Panc1 (cell line): ENCODE measurements at regions of chr2 and their contacts with region 1.

Region 1: DNA sequence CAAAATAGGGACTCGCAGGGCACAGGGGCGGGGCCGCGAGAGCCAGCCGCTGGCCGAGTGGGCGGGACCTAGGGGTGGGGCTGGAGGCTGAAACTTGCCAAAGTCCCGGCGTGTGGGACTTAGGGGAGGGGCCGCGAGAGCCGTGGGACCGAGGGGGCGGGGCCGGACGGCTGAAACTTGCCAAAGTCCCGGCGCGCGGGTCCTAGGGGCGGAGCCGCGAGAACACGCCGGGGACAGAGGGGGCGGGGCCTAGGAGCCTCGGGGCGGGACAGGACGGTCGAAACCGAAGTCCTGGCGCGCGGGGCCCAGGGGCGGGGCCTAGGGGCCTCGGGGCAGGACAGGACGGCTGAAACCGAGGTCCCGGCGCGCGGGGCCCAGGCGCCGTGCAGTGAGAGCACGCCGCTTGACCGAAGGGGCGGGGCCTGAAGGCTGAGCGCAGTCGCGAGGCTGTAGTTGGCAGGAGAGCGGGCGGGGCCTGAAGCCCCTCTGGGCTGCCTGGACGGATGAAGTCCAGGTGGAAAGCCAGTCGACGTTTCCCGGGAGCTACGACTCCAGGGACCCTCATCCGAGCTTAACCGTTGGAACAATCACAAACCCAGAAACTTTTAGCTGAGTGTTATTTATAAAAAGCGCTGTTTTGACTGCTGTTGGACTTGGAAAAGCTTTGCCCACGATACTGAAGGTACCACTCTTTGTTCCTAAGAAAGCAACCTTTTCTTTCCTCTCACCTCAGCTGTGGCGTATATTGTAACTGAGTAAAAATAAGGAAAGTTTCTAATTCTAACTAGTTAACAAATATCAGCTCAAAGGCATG is 475 bp upstream of the BARD1 start:
- DNase-seq: peak; percentile 88
- ATAC-seq: peak; percentile 96
- H3K4me3 ChIP-seq: peak overlapping the region; percentile 91 to 95
- H3K27ac ChIP-seq: peak overlapping the region; percentile 93
- H3K4me1 ChIP-seq: peaks cover 16% of the 10 kb centered on the region
- H3K27me3 ChIP-seq: no peaks in the 10 kb centered on the region
- CTCF ChIP-seq: no peak

Region 2: GRCh38 chr2:214648520-214648919 is 161.4 kb before region 1 on chr2:
- CTCF ChIA-PET with region 1: no interaction called
- POLR2A ChIA-PET with region 1: no interaction called
- in situ Hi-C with region 1: no loop called
- intact Hi-C with region 1: no loop called
- DNase-seq: no peak
- ATAC-seq: no peak
- H3K4me3 ChIP-seq: no peak overlapping the region
- H3K27ac ChIP-seq: no peak overlapping the region
- H3K4me1 ChIP-seq: no peaks in the 10 kb centered on the region
- H3K27me3 ChIP-seq: no peaks in the 10 kb centered on the region
- CTCF ChIP-seq: no peak

Region 3: DNA sequence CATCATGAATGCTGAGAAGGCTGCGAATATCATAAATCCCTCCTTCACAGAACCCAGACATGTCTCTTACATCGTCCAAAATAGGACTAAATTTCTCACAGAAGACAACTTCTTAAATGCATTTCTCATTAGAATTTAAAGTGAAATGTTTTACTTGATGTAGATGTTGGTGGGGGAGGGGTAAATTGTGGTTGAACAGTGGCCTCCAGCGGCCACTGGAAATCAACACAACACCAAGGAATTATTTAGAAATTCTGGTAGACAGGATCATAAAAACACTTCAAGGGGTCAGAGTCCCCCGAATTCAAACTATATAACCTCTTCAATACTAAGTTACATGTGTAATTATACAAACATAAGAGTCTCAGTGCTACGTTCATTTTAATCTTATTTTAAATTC is 192.5 kb after region 1 on chr2:
- CTCF ChIA-PET with region 1: no interaction called
- POLR2A ChIA-PET with region 1: no interaction called
- in situ Hi-C with region 1: no loop called
- intact Hi-C with region 1: loop called (anchors 10 kb)
- DNase-seq: peak; percentile 10
- ATAC-seq: peak; percentile 62; the same call in 1 of the 2 replicates
- H3K4me3 ChIP-seq: no peak overlapping the region
- H3K27ac ChIP-seq: no peak overlapping the region
- H3K4me1 ChIP-seq: no peaks in the 10 kb centered on the region; the same call in 1 of the 2 replicates
- H3K27me3 ChIP-seq: no peaks in the 10 kb centered on the region
- CTCF ChIP-seq: peak; percentile 63; the same call in 1 of the 2 replicates

Region 4: GRCh38 chr2:215104226-215104625 is 294.3 kb after region 1 on chr2:
- CTCF ChIA-PET with region 1: no interaction called
- POLR2A ChIA-PET with region 1: no interaction called
- in situ Hi-C with region 1: no loop called
- intact Hi-C with region 1: no loop called
- DNase-seq: no peak
- ATAC-seq: no peak
- H3K4me3 ChIP-seq: no peak overlapping the region
- H3K27ac ChIP-seq: no peak overlapping the region
- H3K4me1 ChIP-seq: no peaks in the 10 kb centered on the region
- H3K27me3 ChIP-seq: no peaks in the 10 kb centered on the region
- CTCF ChIP-seq: no peak

Region 5: GRCh38 chr2:216108310-216108966 is 1298.5 kb after region 1 on chr2:
- CTCF ChIA-PET with region 1: no interaction called
- POLR2A ChIA-PET with region 1: interaction called, 12 read pairs
- in situ Hi-C with region 1: no loop called
- intact Hi-C with region 1: no loop called
- DNase-seq: no peak
- ATAC-seq: no peak
- H3K4me3 ChIP-seq: peak overlapping the region; percentile 44 to 64
- H3K27ac ChIP-seq: peak overlapping the region; percentile 98
- H3K4me1 ChIP-seq: peaks cover 32% of the 10 kb centered on the region
- H3K27me3 ChIP-seq: no peaks in the 10 kb centered on the region
- CTCF ChIP-seq: no peak